ENCODE measurements at regions of chr10 and their contacts with region 1.

Region 1: GRCh38 chr10:31864834-31865518 is 63.7 kb downstream of the ARHGAP12 start:
- DNase-seq: no peak
- H3K4me3 ChIP-seq: no peak overlapping the region
- H3K27ac ChIP-seq: no peak overlapping the region; a peak in 1 of 4 replicates
- H3K4me1 ChIP-seq: peaks cover 3 to 16% of the 10 kb centered on the region in 2 experiments; a peak in 3 of 4 replicates
- H3K27me3 ChIP-seq: no peaks in the 10 kb centered on the region
- CTCF ChIP-seq: no peak
- EP300 ChIP-seq: no peak
- RAD21 ChIP-seq: no peak

Region 2: GRCh38 chr10:31808258-31809218 is 56.4 kb before region 1 on chr10:
- CTCF ChIA-PET with region 1: no interaction called
- POLR2A ChIA-PET with region 1: no interaction called
- DNase-seq: peak; percentile 32
- H3K4me3 ChIP-seq: peak overlapping the region in 1 of 2 experiments; percentile 39; a peak in 2 of 4 replicates
- H3K27ac ChIP-seq: peak overlapping the region; percentile 59 to 72
- H3K4me1 ChIP-seq: peaks cover 0 to 3% of the 10 kb centered on the region in 2 experiments; a peak in 1 of 4 replicates
- H3K27me3 ChIP-seq: no peaks in the 10 kb centered on the region
- CTCF ChIP-seq: peak; percentile 72
- EP300 ChIP-seq: no peak
- RAD21 ChIP-seq: peak; percentile 85

Region 3: GRCh38 chr10:31851216-31851615 is 13.8 kb before region 1 on chr10:
- CTCF ChIA-PET with region 1: interaction called, 16 read pairs
- POLR2A ChIA-PET with region 1: no interaction called
- DNase-seq: no peak
- H3K4me3 ChIP-seq: no peak overlapping the region
- H3K27ac ChIP-seq: no peak overlapping the region
- H3K4me1 ChIP-seq: no peaks in the 10 kb centered on the region; a peak in 1 of 4 replicates
- H3K27me3 ChIP-seq: no peaks in the 10 kb centered on the region
- CTCF ChIP-seq: no peak
- EP300 ChIP-seq: no peak
- RAD21 ChIP-seq: no peak

Region 4: GRCh38 chr10:31947144-31947926 is 82.4 kb after region 1 on chr10:
- CTCF ChIA-PET with region 1: interaction called, 26 read pairs
- POLR2A ChIA-PET with region 1: no interaction called
- DNase-seq: peak; percentile 50
- H3K4me3 ChIP-seq: no peak overlapping the region
- H3K27ac ChIP-seq: peak overlapping the region in 1 of 2 experiments; percentile 33; a peak in 1 of 4 replicates
- H3K4me1 ChIP-seq: peaks cover 0 to 26% of the 10 kb centered on the region in 2 experiments; a peak in 3 of 4 replicates
- H3K27me3 ChIP-seq: no peaks in the 10 kb centered on the region
- CTCF ChIP-seq: peak; percentile 64
- EP300 ChIP-seq: 0 out of 4 replicates have a peak, but pooled peaks of 1 of the 2 experiments have one; percentile 21
- RAD21 ChIP-seq: peak; percentile 77

Region 5: GRCh38 chr10:32005050-32005449 is 140.1 kb after region 1 on chr10:
- CTCF ChIA-PET with region 1: interaction called, 22 read pairs
- POLR2A ChIA-PET with region 1: no interaction called
- DNase-seq: peak; percentile 38
- H3K4me3 ChIP-seq: no peak overlapping the region
- H3K27ac ChIP-seq: no peak overlapping the region
- H3K4me1 ChIP-seq: peaks cover 0 to 9% of the 10 kb centered on the region in 2 experiments; a peak in 1 of 4 replicates
- H3K27me3 ChIP-seq: no peaks in the 10 kb centered on the region
- CTCF ChIP-seq: peak; percentile 64
- EP300 ChIP-seq: no peak
- RAD21 ChIP-seq: peak; percentile 59

Region 6: GRCh38 chr10:33005322-33006301 is 1140.6 kb after region 1 on chr10:
- CTCF ChIA-PET with region 1: no interaction called
- POLR2A ChIA-PET with region 1: no interaction called
- DNase-seq: peak; percentile 82
- H3K4me3 ChIP-seq: peak overlapping the region; percentile 49 to 58
- H3K27ac ChIP-seq: peak overlapping the region; percentile 82 to 96
- H3K4me1 ChIP-seq: peaks cover 3 to 26% of the 10 kb centered on the region in 2 experiments; a peak in 3 of 4 replicates
- H3K27me3 ChIP-seq: no peaks in the 10 kb centered on the region
- CTCF ChIP-seq: 0 out of 2 replicates have a peak, but pooled peaks have one; percentile 6
- EP300 ChIP-seq: peak in 1 of 2 experiments; percentile 51; a peak in 1 of 4 replicates
- RAD21 ChIP-seq: no peak

Measured in SK-N-SH (cell line).